T-cell (primary cell): ENCODE measurements at regions of chr5 and their contacts with region 1.

Region 1: DNA sequence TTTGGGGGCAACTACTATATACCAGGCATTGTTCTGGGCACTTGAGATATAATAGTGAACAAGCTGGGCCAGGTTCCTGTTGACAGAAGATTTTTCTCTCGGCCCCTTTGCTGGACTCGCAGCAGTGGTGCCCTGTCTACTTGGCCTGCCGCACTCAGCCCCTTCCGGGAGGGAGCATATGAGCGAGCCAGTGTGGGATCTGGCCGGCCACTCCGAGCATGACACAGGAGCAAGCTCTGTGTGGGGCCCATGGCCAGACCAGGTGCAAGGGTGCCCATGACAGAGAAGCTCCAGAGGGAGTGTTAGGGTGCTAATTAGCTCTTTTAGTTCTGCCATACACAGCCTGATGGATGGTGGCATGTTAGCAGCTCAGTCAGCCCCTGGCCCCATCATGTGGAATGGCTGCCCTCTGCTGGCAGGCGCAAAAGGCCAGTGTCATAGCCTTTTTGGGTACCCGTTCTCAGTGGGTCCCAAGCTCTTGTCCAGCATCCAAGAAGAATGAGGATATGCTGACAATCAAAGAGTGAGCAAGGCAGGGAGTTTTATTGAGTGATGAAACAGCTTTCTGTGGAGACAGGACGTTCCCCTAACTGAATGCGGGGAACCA is 9.3 kb upstream of the KIF4B start:
- DNase-seq: peak in 4 of 35 experiments; percentile 3 to 17 (median 9)
- ATAC-seq: no peak
- H3K4me3 ChIP-seq: no peak overlapping the region
- H3K4me3 Mint-ChIP-seq: no peak overlapping the region
- H3K27ac ChIP-seq: no peak overlapping the region
- H3K27ac Mint-ChIP-seq: no peak overlapping the region
- H3K4me1 ChIP-seq: no peaks in the 10 kb centered on the region
- H3K4me1 Mint-ChIP-seq: no peaks in the 10 kb centered on the region
- H3K27me3 ChIP-seq: peaks cover 0 to 18% of the 10 kb centered on the region in 2 experiments
- H3K27me3 Mint-ChIP-seq: peaks cover 33 to 44% of the 10 kb centered on the region in 2 donors

Region 2: GRCh38 chr5:156942064-156942463 is 1937.8 kb after region 1 on chr5:
- CTCF ChIA-PET with region 1: no interaction called
- POLR2A ChIA-PET with region 1: interaction called in 1 of 2 experiments, 15 read pairs
- DNase-seq: no peak
- ATAC-seq: peak in 2 of 4 experiments; percentile 65 to 66
- H3K4me3 ChIP-seq: no peak overlapping the region
- H3K4me3 Mint-ChIP-seq: peak overlapping the region in 2 of 3 donors; percentile 10 to 34
- H3K27ac ChIP-seq: peak overlapping the region; percentile 27
- H3K27ac Mint-ChIP-seq: peak overlapping the region; percentile 88 to 92
- H3K4me1 ChIP-seq: peaks cover 4 to 7% of the 10 kb centered on the region in 2 experiments
- H3K4me1 Mint-ChIP-seq: peaks cover 13 to 20% (median 16%) of the 10 kb centered on the region in 3 donors
- H3K27me3 ChIP-seq: no peaks in the 10 kb centered on the region
- H3K27me3 Mint-ChIP-seq: no peaks in the 10 kb centered on the region